HEK293T (cell line): ENCODE measurements at regions of chr11 and their contacts with region 1.

Region 1: DNA sequence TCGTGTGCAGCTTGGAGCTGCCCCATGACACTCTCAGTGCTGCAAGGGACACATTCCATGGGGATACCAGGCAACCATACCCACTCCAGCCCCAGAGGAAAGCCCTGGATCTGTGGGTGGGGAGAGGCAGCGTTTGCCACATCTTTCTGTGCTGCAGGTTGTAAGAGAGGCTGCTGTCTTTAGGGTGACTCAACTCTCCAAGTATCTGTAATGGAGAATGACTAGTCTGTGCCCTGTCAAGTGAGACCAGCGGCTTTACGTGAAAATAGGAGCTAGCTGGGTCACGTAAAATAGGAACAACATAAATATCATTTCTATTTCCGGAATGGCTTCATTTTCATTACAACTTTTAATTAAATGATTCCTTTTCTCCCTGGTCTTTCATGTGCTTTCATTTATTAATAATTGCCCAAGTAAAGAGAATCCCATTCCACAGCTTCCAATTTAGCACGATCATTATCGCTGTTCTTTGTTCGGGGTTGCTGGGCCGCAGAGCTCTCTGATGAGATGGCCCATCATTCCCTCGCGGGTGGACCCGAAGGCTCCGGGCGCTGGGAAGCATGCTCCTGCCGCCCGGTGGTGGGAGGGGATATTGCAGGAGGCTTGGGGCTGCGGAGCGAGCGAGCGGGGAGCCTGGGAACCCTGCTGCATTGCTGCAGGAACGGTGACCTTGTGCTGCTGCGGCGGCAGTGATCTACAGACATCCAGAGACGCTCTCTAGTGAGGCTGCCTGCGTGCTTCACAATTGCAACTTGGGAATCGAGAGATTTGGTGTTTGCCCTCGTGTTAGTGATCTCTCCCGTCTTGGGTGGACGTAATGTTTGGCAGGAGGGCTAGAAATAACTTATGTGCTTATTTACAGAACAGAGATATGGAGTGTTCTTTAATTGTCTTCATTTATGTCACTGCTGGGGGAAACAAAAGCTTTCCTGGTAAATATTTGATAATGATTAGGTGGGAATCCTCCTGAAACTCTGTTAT is 10.6 kb downstream of the SLC6A5 start:
- DNase-seq: peak; percentile 85

Region 2: GRCh38 chr11:20042118-20042518 is 567.9 kb before region 1 on chr11:
- CTCF ChIA-PET with region 1: interaction called, 10 read pairs
- POLR2A ChIA-PET with region 1: no interaction called
- DNase-seq: no peak

Region 3: GRCh38 chr11:20599221-20600019 is 10.6 kb before region 1 on chr11 and contains the start of gene SLC6A5:
- CTCF ChIA-PET with region 1: interaction called, 10 read pairs
- POLR2A ChIA-PET with region 1: no interaction called
- DNase-seq: peak; percentile 70